Activated T-helper 2 cell treated with anti-CD3 and anti-CD28 coated beads, Interferon-gamma antibody, Interleukin-2, Interleukin-4, amounts not matched to agents 10 μg/mL and 5 μg/mL and 100 μg/mL, durations not matched to agents 14 hours and 24 hours and 36 hours (primary cell): ENCODE measurements at regions of chrX and their contacts with region 1.

Region 1: DNA sequence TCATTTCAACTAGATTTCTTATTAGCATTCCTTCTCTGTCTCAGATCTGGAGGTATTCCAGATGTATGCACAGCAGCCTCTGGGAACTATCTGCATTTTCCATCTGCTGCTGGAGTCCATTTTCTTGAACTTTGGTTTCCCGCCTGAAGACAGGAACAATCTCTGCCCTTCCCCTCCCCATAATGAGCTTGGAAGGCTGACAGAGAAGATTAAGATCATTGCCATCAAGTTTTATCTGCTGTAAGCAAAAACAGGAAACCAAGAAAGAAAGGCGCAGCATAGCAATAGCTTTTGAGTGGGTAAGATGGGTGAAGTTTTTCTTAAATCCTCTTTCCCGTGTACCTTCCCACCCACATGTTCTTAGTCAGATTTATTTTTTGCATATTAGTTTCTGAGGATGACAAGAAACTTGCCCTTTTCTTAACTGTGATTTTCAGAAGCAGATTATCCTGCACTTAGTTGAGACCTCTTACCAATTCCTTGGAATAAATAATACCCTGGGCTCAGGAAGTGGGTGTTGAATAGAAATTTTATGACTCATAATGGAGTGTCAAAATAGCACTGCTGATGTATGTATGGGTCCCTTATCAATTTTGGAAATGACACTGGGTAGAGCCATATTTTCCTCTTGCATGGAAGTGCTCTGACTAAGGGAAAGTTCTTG is 78.3 kb downstream of the CT47B1 start:
- DNase-seq: no peak
- H3K4me3 Mint-ChIP-seq: peak overlapping the region; percentile 30
- H3K27ac Mint-ChIP-seq: peak overlapping the region; percentile 90
- H3K4me1 Mint-ChIP-seq: peaks cover 79% of the 10 kb centered on the region
- H3K27me3 Mint-ChIP-seq: no peaks in the 10 kb centered on the region

Region 2: GRCh38 chrX:120774606-120775005 is 22.7 kb before region 1 on chrX:
- intact Hi-C with region 1: no loop called
- DNase-seq: no peak
- H3K4me3 Mint-ChIP-seq: no peak overlapping the region
- H3K27ac Mint-ChIP-seq: no peak overlapping the region
- H3K4me1 Mint-ChIP-seq: peaks cover 5% of the 10 kb centered on the region
- H3K27me3 Mint-ChIP-seq: no peaks in the 10 kb centered on the region

Region 3: DNA sequence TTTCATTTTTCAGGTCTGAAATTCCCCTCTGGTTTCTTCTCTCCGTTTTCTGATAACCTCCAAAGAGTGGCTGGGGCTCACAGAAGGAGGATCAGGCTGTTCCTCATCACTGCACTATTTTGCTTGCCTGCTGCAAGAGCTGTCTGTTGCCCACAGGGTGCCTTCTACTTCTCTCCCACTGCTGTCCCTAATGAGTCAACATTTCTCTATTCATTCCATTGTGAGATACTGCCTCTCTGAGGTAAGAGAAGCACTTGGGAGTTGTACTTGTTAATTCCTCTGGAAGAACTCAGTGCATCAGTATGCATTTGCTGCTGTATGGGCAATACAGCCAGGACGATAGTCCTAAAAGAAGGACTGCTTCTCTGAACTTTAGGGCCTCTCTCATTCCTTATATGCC is 43.5 kb after region 1 on chrX:
- intact Hi-C with region 1: loop called (anchors 5 kb)
- DNase-seq: no peak
- H3K4me3 Mint-ChIP-seq: no peak overlapping the region
- H3K27ac Mint-ChIP-seq: no peak overlapping the region
- H3K4me1 Mint-ChIP-seq: peaks cover 4% of the 10 kb centered on the region
- H3K27me3 Mint-ChIP-seq: no peaks in the 10 kb centered on the region

Region 4: GRCh38 chrX:121160987-121161386 is 363.7 kb after region 1 on chrX:
- intact Hi-C with region 1: loop called (anchors 1 kb)
- DNase-seq: no peak
- H3K4me3 Mint-ChIP-seq: peak overlapping the region; percentile 17
- H3K27ac Mint-ChIP-seq: peak overlapping the region; percentile 88
- H3K4me1 Mint-ChIP-seq: peaks cover 37% of the 10 kb centered on the region
- H3K27me3 Mint-ChIP-seq: no peaks in the 10 kb centered on the region

Region 5: GRCh38 chrX:121244511-121244910 is 447.2 kb after region 1 on chrX:
- intact Hi-C with region 1: loop called (anchors 5 kb)
- DNase-seq: no peak
- H3K4me3 Mint-ChIP-seq: no peak overlapping the region
- H3K27ac Mint-ChIP-seq: no peak overlapping the region
- H3K4me1 Mint-ChIP-seq: peaks cover 17% of the 10 kb centered on the region
- H3K27me3 Mint-ChIP-seq: no peaks in the 10 kb centered on the region

Region 6: DNA sequence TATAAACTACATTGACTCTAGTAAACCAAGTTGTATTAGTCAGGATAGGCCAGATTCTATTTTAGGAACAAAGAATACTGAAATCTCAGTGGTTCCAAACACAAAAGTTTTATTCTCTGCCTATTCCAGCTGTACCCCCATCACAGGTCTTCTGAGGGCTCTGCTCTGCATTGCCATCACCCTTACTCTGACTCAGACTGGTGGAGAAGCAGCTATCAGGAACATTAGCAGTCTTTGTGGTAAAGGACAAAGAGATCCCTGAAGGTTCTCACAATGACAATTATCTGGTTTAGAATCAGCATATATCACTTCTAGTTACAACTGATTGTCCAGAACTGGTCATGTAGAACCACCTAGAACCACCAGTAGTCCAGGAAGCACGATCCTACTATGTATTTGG is 501.2 kb after region 1 on chrX:
- intact Hi-C with region 1: loop called (anchors 1 kb)
- DNase-seq: no peak
- H3K4me3 Mint-ChIP-seq: no peak overlapping the region
- H3K27ac Mint-ChIP-seq: no peak overlapping the region
- H3K4me1 Mint-ChIP-seq: peaks cover 6% of the 10 kb centered on the region
- H3K27me3 Mint-ChIP-seq: no peaks in the 10 kb centered on the region

Region 7: DNA sequence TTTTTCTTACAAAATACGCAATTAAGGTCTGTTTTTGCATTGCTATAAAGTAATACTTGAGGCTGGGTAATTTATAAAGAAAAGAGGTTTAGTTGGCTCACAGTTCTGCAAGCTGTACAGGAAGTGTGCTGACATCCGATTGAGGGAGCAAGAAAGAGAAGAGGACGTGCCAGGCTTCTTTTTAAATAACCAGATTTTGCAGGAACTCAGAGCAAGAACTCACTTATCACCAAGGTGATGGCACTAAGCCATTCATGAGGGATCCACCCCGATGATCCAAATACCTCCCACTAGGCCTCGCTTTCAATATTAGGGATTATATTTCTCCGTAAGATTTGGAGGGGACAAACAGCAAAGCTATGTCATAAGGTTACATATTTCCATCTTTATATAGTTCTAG is 706.8 kb after region 1 on chrX:
- intact Hi-C with region 1: loop called (anchors 5 kb)
- DNase-seq: no peak
- H3K4me3 Mint-ChIP-seq: no peak overlapping the region
- H3K27ac Mint-ChIP-seq: no peak overlapping the region
- H3K4me1 Mint-ChIP-seq: no peaks in the 10 kb centered on the region
- H3K27me3 Mint-ChIP-seq: no peaks in the 10 kb centered on the region